ENCODE measurements at regions of chr1 and their contacts with region 1.

Region 1: DNA sequence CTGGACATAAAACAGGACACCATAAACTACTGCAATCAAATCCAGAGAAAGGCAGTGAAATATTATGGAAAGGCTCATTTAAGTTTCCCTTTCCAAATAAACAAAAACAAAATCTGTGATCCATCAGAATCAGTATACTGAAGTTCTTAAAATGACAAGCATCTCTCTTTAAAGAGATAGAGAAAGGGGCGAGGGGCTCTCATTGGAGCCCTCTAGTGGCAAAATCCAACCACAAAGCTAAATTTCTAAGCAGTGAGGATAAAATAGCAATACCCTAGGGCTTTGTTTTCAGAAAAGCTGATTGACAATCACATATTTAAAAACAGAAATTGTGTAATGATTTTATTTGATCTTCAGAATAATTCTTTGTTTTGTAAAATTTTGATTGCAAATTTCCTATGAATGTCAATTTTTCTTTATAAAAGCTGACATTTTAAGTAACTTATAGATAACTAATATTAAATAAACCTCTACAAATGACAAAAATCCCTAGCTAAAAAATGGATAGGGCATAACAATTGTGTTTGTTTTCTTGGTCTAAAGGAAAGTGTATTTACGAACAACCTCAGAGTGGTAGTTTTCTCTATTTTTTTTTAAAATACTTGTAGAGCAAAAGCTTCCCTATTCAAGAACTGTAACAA is 138.2 kb downstream of the COL24A1 start:
- DNase-seq: no peak
- H3K4me3 ChIP-seq: no peak overlapping the region
- CTCF ChIP-seq: peak; percentile 59

Region 2: GRCh38 chr1:85894651-85895050 is 123.8 kb before region 1 on chr1:
- CTCF ChIA-PET with region 1: interaction called, 31 read pairs
- POLR2A ChIA-PET with region 1: no interaction called
- DNase-seq: no peak
- H3K4me3 ChIP-seq: no peak overlapping the region
- CTCF ChIP-seq: peak; percentile 41

Region 3: DNA sequence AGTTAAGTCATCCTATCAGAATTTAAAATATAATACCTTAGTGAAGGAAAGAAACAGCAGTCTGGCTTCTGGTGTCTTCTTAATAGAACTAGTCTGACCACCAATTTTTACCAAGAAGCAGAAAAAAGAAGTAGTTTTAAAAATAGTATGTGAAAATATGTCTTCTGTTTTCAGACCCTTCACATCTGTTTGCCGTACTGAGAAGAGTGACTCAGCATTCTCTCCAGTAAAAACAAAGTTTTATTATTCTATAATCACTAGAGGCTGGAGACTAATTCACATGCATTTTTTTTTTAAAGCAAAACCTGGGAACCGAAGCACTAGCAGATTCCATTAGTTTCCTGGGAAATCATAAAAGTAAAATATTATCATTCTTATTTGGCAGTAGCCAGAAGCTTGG is 25.6 kb before region 1 on chr1:
- CTCF ChIA-PET with region 1: interaction called, 10 read pairs
- POLR2A ChIA-PET with region 1: no interaction called
- DNase-seq: peak; percentile 42
- H3K4me3 ChIP-seq: no peak overlapping the region
- CTCF ChIP-seq: no peak

Region 4: GRCh38 chr1:86035101-86035500 is 16.7 kb after region 1 on chr1:
- CTCF ChIA-PET with region 1: interaction called, 20 read pairs
- POLR2A ChIA-PET with region 1: no interaction called
- DNase-seq: no peak
- H3K4me3 ChIP-seq: no peak overlapping the region
- CTCF ChIP-seq: no peak

Region 5: GRCh38 chr1:86064899-86065298 is 46.5 kb after region 1 on chr1:
- CTCF ChIA-PET with region 1: interaction called, 12 read pairs
- POLR2A ChIA-PET with region 1: no interaction called
- DNase-seq: no peak
- H3K4me3 ChIP-seq: no peak overlapping the region
- CTCF ChIP-seq: no peak

Region 6: DNA sequence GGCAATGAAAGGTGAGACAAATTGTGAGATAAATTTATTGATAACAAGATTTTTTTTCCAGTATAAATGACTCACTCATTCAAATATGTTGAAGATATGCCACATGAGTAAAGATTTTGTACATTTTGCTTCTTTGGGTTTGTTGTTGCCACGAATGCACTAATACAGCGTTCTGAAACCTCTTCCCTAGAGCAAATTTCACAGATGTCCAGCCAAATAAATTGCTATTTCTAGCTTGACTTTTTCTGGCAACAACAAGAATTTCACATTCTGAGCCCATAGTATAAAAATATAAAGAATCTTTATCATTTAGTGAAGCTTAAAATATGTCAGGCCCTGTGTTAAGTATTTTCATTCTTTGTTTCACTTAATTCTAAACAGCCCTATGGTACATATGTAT is 252.6 kb after region 1 on chr1:
- CTCF ChIA-PET with region 1: no interaction called
- POLR2A ChIA-PET with region 1: no interaction called
- DNase-seq: no peak
- H3K4me3 ChIP-seq: no peak overlapping the region
- CTCF ChIP-seq: no peak